Psoas muscle (tissue), 8 donors: ENCODE measurements at regions of chr5 and their contacts with region 1.

Region 1: GRCh38 chr5:40736103-40736875 is 19.5 kb downstream of the TTC33 start:
- DNase-seq: no peak
- ATAC-seq: peak in 3 of 4 donors; percentile 56 to 84 (median 64)
- H3K4me3 ChIP-seq: no peak overlapping the region
- H3K27ac ChIP-seq: no peak overlapping the region
- H3K4me1 ChIP-seq: peaks cover 13% of the 10 kb centered on the region
- H3K27me3 ChIP-seq: no peaks in the 10 kb centered on the region
- CTCF ChIP-seq: peak; percentile 81

Region 2: GRCh38 chr5:39578887-39579497 is 1157.3 kb before region 1 on chr5:
- intact Hi-C with region 1: loop called in 1 of 2 experiments (anchors 2 kb)
- DNase-seq: no peak
- ATAC-seq: no peak
- H3K4me3 ChIP-seq: no peak overlapping the region
- H3K27ac ChIP-seq: no peak overlapping the region
- H3K4me1 ChIP-seq: no peaks in the 10 kb centered on the region
- H3K27me3 ChIP-seq: no peaks in the 10 kb centered on the region
- CTCF ChIP-seq: peak; percentile 79

Region 3: GRCh38 chr5:39714036-39714698 is 1022.1 kb before region 1 on chr5:
- intact Hi-C with region 1: loop called in 1 of 2 experiments (anchors 10 kb)
- DNase-seq: no peak
- ATAC-seq: peak in 3 of 4 donors; percentile 69 to 83 (median 74)
- H3K4me3 ChIP-seq: no peak overlapping the region
- H3K27ac ChIP-seq: peak overlapping the region; percentile 65
- H3K4me1 ChIP-seq: peaks cover 9% of the 10 kb centered on the region
- H3K27me3 ChIP-seq: no peaks in the 10 kb centered on the region
- CTCF ChIP-seq: peak; percentile 68

Region 4: GRCh38 chr5:39948867-39949468 is 787.3 kb before region 1 on chr5:
- intact Hi-C with region 1: loop called in 1 of 2 experiments (anchors 5 kb)
- DNase-seq: no peak
- ATAC-seq: peak in 3 of 4 donors; percentile 54 to 72 (median 55)
- H3K4me3 ChIP-seq: no peak overlapping the region
- H3K27ac ChIP-seq: no peak overlapping the region
- H3K4me1 ChIP-seq: no peaks in the 10 kb centered on the region
- H3K27me3 ChIP-seq: no peaks in the 10 kb centered on the region
- CTCF ChIP-seq: peak; percentile 67